Right ventricle myocardium superior (tissue), 1 donor: ENCODE measurements at regions of chr6 and their contacts with region 1.

Region 1: DNA sequence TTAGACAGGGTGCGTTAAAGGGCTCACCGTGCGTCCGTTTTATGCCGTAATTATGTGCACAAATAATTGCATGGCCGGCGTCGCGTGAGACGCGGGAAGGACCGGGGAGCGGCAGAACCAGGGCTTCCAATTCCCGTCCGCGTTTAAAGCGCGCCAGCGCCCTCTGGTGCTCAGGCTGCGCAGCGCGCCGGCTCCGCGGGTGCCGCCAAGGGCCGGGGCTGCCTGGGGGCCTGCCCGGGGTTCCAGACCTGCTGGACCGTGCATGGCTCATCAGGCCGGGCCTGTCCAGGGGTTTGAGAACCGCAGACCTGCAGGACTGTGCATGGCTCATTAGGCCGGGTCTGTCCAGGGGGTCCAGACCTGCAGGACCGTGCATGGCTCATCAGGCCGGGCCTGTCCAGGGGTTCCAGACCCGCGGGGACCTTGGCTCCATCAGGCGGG is 369.0 kb downstream of the THBS2 start:
- DNase-seq: peak; percentile 85
- ATAC-seq: peak; percentile 96

Region 2: GRCh38 chr6:168157272-168158007 is 727.2 kb before region 1 on chr6:
- intact Hi-C with region 1: loop called (anchors 10 kb)
- DNase-seq: no peak
- ATAC-seq: peak; percentile 27

Region 3: DNA sequence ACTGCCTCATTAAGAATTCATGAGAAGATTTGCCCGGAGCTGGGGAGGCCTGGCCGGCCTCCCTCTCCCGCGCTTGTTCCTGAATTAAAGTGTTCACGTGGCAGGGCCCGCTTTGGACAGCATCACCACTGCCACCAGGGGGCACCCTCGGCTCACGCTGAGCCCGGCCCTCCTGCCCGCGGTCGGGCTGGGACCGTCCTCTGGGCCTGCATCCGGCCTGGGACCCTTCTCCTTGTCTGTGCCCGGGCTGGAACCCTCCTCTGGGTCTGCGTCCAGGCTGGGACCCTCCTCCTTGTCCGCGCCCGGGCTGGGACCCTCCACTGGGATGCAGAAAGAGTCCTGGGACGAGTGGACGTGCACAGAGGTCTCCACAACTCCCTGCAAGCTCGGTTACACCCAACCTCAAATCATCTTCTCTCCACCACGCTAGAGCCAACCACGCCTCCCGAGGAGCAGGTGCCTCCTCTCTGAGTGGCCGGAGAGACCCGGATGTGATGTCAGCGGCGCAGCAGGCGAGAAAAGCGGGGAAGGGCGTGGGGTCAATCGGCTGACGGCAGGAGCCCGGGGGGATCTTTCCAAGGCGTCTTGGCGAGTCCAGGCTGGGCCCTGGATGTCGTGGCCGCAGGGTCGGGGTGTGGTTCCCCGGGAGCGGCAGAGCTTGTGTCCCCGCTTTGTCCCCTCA is 514.2 kb before region 1 on chr6:
- intact Hi-C with region 1: loop called (anchors 5 kb)
- DNase-seq: peak; percentile 85
- ATAC-seq: peak; percentile 92

Region 4: GRCh38 chr6:168559574-168560098 is 325.0 kb before region 1 on chr6:
- intact Hi-C with region 1: no loop called
- DNase-seq: no peak
- ATAC-seq: peak; percentile 50

Region 5: DNA sequence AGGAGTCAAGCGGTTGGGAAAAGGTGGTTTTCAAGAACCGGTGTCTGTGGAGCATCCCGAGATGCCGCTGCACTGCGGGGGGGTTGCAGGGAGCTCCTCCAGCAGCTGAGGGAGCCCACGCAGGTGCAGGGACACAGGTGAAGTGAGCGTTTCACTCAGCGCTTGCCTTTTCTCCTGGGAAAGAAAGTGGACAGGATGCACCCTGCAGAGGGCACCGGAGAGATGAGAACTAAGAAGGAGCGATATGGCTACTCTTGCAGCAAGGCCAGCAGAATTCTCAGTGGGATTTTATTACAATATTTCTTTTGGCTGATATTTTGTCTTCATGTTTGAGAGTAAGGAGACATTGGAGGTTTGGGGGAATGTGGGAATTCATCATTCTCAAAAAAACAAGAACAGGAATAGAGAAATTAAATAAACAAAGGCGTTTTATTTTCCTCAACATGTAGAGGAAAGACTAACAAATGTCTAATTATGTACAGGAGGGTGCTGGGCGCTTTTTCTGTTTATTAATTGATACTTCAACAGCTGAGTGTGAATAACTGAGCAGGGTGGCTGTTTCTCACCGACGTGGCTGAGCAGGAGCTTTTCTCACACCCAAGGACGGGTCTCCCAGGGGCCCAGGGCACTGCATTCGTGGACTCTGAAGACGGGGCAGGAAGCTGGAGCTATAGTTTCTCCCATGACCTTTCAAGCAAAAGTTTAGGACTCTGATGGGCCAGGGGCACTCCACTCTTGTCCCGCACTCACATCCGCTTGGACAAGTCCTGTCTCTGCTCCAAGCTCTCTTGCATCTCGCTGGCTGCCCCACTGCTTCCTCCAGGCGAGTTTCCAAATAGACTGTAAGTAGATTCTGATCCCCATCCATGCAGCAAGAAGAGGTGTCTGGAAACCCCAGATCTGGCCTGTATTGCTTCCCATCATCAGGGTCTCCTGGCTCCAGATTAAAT is 267.6 kb before region 1 on chr6:
- intact Hi-C with region 1: loop called (anchors 5 kb)
- DNase-seq: peak; percentile 52
- ATAC-seq: peak; percentile 80